ENCODE measurements at regions of chr18 and their contacts with region 1.

Region 1: GRCh38 chr18:47930931-47931717 is 665 bp upstream of the SMAD2 start:
- DNase-seq: peak; percentile 98 to 99 (median 99)
- ATAC-seq: peak; percentile 92 to 95 (median 94)
- H3K4me3 ChIP-seq: peak overlapping the region; percentile 66 to 95 (median 84)
- H3K27ac ChIP-seq: peak overlapping the region; percentile 93 to 99 (median 97)
- H3K4me1 ChIP-seq: peaks cover 0 to 53% (median 34%) of the 10 kb centered on the region in 12 donors
- H3K27me3 ChIP-seq: no peaks in the 10 kb centered on the region
- CTCF ChIP-seq: no peak
- POLR2A ChIP-seq: peak in 1 of 2 donors; percentile 69

Region 2: DNA sequence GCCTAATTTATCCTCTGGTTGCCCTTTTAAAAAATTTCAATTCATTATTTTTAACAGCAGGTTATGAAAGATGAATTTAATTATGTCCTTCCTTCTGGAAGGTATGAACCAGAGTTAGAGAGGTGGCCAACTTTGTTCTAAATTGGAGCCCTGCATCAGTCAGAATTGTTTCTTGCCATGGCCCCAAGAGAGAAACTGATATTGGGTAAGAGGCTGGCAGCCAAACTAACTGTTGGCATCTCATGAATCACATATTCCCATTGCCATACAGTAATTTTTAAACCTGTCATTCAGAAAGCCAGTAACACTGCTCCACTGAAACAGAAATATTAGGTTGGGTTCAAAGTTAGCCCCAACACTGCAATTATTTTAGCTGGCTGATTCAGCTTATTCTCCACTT is 68.1 kb before region 1 on chr18:
- intact Hi-C with region 1: loop called in 5 of 10 experiments (anchors 5 to 10 kb)
- DNase-seq: peak in 4 of 5 donors; percentile 26 to 40 (median 33)
- ATAC-seq: peak; percentile 92 to 96 (median 95)
- H3K4me3 ChIP-seq: no peak overlapping the region
- H3K27ac ChIP-seq: peak overlapping the region in 8 of 12 donors; percentile 15 to 63 (median 36)
- H3K4me1 ChIP-seq: peaks cover 0 to 14% (median 2%) of the 10 kb centered on the region in 12 donors
- H3K27me3 ChIP-seq: no peaks in the 10 kb centered on the region
- CTCF ChIP-seq: no peak
- POLR2A ChIP-seq: no peak

Region 3: DNA sequence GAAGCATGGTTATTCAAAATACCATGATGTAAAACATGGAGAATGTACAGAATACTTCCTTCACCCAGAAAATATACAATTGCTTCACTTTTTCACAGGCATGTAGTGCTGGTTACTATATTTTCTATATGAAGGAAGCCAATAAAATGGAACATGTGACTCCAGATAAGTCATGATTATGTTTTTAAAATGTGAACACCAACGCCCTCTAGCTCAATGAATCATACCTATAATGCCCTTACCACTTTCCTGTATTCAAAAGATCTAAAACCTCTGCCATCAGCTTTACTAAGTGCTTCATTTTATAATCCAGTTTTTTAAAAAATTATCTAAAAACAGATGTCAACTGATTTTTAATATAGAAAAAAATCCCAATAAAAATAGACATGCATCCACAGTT is 60.5 kb before region 1 on chr18:
- intact Hi-C with region 1: loop called in 4 of 10 experiments (anchors 5 to 10 kb)
- DNase-seq: no peak
- ATAC-seq: no peak
- H3K4me3 ChIP-seq: no peak overlapping the region
- H3K27ac ChIP-seq: no peak overlapping the region
- H3K4me1 ChIP-seq: peaks cover 0 to 27% (median 8%) of the 10 kb centered on the region in 12 donors
- H3K27me3 ChIP-seq: no peaks in the 10 kb centered on the region
- CTCF ChIP-seq: no peak
- POLR2A ChIP-seq: no peak

Region 4: DNA sequence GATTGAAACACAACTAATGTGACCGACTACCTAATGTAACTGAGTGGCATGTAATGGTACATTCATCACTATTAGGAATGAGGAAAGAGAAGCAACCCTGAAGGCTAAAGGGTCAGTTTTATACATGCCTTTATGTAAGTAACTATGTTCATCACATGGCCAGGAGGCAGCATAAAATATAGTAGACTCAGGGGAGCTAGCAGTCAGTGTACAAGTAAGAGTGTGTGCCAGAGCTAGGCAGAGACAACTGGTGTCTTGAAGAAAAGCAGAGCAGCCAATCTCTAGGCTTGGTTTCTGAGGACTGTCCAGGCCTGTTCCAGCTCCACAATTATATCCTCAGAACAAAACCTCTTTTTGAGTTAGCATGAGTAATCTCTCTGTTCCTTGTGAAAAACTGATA is 18.8 kb before region 1 on chr18:
- intact Hi-C with region 1: loop called in 1 of 10 experiments (anchors 2 kb)
- DNase-seq: no peak
- ATAC-seq: peak; percentile 28 to 60 (median 50)
- H3K4me3 ChIP-seq: no peak overlapping the region
- H3K27ac ChIP-seq: peak overlapping the region; percentile 50 to 79 (median 74)
- H3K4me1 ChIP-seq: peaks cover 0 to 80% (median 55%) of the 10 kb centered on the region in 12 donors
- H3K27me3 ChIP-seq: no peaks in the 10 kb centered on the region
- CTCF ChIP-seq: no peak
- POLR2A ChIP-seq: no peak

Region 5: GRCh38 chr18:47987388-47987699 is 56.2 kb after region 1 on chr18:
- intact Hi-C with region 1: no loop called
- DNase-seq: no peak
- ATAC-seq: no peak
- H3K4me3 ChIP-seq: no peak overlapping the region
- H3K27ac ChIP-seq: no peak overlapping the region
- H3K4me1 ChIP-seq: peaks cover 0 to under 1% (median 0%) of the 10 kb centered on the region in 12 donors
- H3K27me3 ChIP-seq: no peaks in the 10 kb centered on the region
- CTCF ChIP-seq: no peak
- POLR2A ChIP-seq: no peak

Region 6: GRCh38 chr18:48002933-48003365 is 71.8 kb after region 1 on chr18:
- intact Hi-C with region 1: loop called in 8 of 10 experiments (anchors 2 to 5 kb)
- DNase-seq: peak; percentile 74 to 90 (median 77)
- ATAC-seq: peak; percentile 90 to 95 (median 91)
- H3K4me3 ChIP-seq: no peak overlapping the region
- H3K27ac ChIP-seq: peak overlapping the region; percentile 44 to 91 (median 70)
- H3K4me1 ChIP-seq: peaks cover 0 to 23% (median 14%) of the 10 kb centered on the region in 12 donors
- H3K27me3 ChIP-seq: no peaks in the 10 kb centered on the region
- CTCF ChIP-seq: no peak
- POLR2A ChIP-seq: no peak

Region 7: DNA sequence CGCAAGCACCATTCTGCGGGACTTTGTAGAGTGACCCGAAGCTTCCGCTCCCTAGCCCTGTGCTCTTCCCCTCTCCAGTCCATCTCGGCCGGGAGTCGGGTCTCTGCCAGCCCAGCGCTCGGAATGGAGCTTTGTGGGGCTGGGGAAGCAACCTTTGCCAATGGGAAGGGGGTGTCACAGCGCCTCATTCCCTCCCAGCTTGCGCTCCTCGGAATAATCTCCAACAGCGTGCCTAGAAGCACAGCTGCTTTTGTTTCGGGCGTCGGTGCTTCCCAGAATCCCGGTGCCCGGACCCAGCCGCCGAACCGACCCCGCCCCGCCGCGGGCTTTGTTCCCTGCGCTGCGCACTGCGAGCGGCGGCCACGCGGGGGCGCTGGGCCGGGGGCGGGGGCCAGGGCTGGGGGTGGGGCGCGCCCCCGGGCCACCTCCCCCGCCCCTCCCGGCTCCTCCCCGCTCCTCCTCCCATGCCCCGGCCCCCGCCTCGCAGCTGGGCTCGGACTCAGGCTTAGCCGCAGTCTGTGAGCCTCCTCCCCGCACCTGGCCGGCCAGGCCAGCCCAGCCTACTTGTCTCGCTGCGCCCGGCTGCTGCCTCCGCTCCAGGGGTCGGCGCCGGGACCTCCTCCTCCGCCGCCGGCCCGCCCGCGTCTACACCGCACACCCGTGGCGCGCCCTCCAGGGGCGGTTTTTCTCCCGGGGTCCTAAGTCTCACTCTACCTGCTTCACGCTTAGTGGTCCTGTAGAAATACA is 77.0 kb after region 1 on chr18:
- intact Hi-C with region 1: loop called in 8 of 10 experiments (anchors 2 to 5 kb)
- DNase-seq: peak; percentile 67 to 78 (median 76)
- ATAC-seq: peak; percentile 50 to 90 (median 72)
- H3K4me3 ChIP-seq: peak overlapping the region; percentile 38 to 73 (median 58)
- H3K27ac ChIP-seq: peak overlapping the region in 7 of 12 donors; percentile 25 to 77 (median 53)
- H3K4me1 ChIP-seq: peaks cover 0 to 28% (median 11%) of the 10 kb centered on the region in 12 donors
- H3K27me3 ChIP-seq: no peaks in the 10 kb centered on the region
- CTCF ChIP-seq: peak; percentile 29 to 96 (median 74)
- POLR2A ChIP-seq: no peak